Activated naive CD4-positive, alpha-beta T cell treated with anti-CD3 and anti-CD28 coated beads for 36 hours (primary cell): ENCODE measurements at regions of chr3 and their contacts with region 1.

Region 1: GRCh38 chr3:169662132-169662842 is 1.2 kb downstream of the MECOM start:
- DNase-seq: peak; percentile 51
- H3K4me3 Mint-ChIP-seq: peak overlapping the region; percentile 78
- H3K27ac Mint-ChIP-seq: no peak overlapping the region
- H3K4me1 Mint-ChIP-seq: peaks cover 39% of the 10 kb centered on the region
- H3K27me3 Mint-ChIP-seq: peaks cover 80% of the 10 kb centered on the region

Region 2: DNA sequence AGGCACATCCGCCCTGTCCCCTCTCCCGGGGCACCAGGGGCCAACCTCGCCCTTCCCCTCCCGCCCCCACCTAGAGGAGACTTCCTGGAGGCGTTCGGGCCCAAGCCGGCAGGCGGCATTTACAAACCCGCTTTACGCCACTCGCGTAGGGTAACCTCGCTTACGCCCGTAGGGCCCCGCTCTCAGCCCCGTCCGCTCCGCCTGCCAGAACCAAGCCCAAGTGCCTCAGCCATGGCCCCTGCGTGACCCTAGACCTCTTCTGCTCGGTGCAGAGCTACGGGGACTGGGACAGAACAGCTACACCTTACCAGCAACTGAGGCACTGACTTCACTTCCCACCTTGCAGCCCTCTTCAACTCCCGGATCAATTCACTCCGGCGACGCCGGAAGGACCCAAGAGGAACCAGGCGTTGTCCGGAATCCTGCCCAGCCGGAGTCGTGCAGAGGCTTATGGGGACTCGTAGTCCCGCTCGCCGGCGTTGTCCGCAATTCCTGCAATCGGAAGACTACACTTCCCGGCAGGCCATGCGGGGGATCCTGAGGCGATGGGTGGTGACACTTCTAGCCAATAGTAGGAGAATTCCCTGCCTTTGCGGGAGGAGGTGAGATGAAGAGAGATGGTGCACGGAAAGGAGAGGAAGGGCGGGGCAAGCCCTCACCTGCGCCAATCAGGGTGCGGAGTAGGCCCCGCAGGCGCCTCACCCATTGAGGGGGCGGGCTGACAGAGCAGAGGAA is 1927.6 kb before region 1 on chr3 and contains the start of gene PDCD10:
- CTCF ChIA-PET with region 1: no interaction called
- intact Hi-C with region 1: loop called (anchors 2 kb)
- DNase-seq: peak; percentile 98
- H3K4me3 Mint-ChIP-seq: no peak within 1 kb of the TSS
- H3K27ac Mint-ChIP-seq: no peak within 1 kb of the TSS
- H3K4me1 Mint-ChIP-seq: peaks cover 37% of the 10 kb centered on the region
- H3K27me3 Mint-ChIP-seq: no peaks in the 10 kb centered on the region
- total RNA-seq, gene PDCD10: 46.6 to 55.7 TPM

Region 3: GRCh38 chr3:169295126-169295525 is 367.2 kb before region 1 on chr3:
- CTCF ChIA-PET with region 1: no interaction called
- intact Hi-C with region 1: loop called (anchors 2 kb)
- DNase-seq: peak; percentile 8
- H3K4me3 Mint-ChIP-seq: no peak overlapping the region
- H3K27ac Mint-ChIP-seq: no peak overlapping the region
- H3K4me1 Mint-ChIP-seq: no peaks in the 10 kb centered on the region
- H3K27me3 Mint-ChIP-seq: peaks cover 7% of the 10 kb centered on the region

Region 4: GRCh38 chr3:169564883-169565282 is 97.4 kb before region 1 on chr3:
- CTCF ChIA-PET with region 1: no interaction called
- intact Hi-C with region 1: loop called (anchors 2 kb)
- DNase-seq: no peak
- H3K4me3 Mint-ChIP-seq: no peak overlapping the region
- H3K27ac Mint-ChIP-seq: no peak overlapping the region
- H3K4me1 Mint-ChIP-seq: no peaks in the 10 kb centered on the region
- H3K27me3 Mint-ChIP-seq: peaks cover 8% of the 10 kb centered on the region

Region 5: GRCh38 chr3:169812332-169813235 is 150.3 kb after region 1 on chr3 and contains the starts of genes LRRC34 and LRRIQ4:
- CTCF ChIA-PET with region 1: no interaction called
- intact Hi-C with region 1: loop called (anchors 2 kb)
- DNase-seq: peak; percentile 91
- H3K4me3 Mint-ChIP-seq: peak within 1 kb of the TSS; percentile 82
- H3K27ac Mint-ChIP-seq: peak within 1 kb of the TSS; percentile 79
- H3K4me1 Mint-ChIP-seq: peaks cover 19% of the 10 kb centered on the region
- H3K27me3 Mint-ChIP-seq: no peaks in the 10 kb centered on the region
- total RNA-seq, gene LRRC34: 3.8 to 3.9 TPM
- total RNA-seq, gene LRRIQ4: 0.12 TPM in 1 of 2 experiments, not detected in the other